SK-N-SH (cell line): ENCODE measurements at regions of chr1 and their contacts with region 1.

Region 1: DNA sequence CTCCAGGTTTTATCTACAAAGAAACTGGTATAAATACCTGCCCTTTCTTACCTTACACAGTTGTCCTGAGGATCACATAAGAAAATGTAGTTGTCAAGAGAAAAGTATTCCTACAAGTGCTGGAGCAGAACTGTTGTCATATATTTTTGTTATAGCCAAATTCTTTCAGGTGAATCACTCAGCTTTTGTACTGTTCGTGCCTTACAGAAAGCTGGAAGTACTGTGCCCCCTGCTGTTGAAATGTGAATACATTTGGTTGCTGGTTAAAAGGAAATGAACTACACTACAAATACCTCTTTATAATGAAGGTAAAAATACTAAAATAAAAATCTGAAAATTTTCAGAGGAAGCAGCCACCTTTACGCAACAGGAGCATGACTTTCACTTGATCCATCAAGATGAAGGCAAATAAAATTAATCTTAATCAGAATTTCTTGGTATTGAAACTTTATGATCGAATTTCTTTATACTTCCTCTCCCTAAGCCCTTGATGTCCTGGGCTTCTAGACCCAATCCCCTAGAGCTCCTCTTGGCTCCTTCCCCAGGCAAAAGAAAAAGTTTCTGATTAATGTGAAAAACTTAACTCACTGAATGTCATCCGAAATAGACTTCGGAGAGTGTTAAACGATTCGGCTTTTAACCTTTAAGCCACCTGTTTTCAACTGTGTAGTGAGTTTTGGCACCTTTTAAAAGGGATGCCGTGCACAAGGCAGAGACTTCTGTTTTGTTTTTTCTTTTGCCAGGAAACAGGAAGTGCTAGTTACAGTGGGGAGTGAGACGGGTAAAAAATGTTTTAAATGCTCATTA is 12.5 kb downstream of the CHML start:
- DNase-seq: no peak
- H3K4me3 ChIP-seq: no peak overlapping the region
- H3K27ac ChIP-seq: no peak overlapping the region
- H3K4me1 ChIP-seq: no peaks in the 10 kb centered on the region; a peak in 1 of 4 replicates
- H3K27me3 ChIP-seq: no peaks in the 10 kb centered on the region
- CTCF ChIP-seq: peak; percentile 82
- EP300 ChIP-seq: no peak
- RAD21 ChIP-seq: peak; percentile 62

Region 2: DNA sequence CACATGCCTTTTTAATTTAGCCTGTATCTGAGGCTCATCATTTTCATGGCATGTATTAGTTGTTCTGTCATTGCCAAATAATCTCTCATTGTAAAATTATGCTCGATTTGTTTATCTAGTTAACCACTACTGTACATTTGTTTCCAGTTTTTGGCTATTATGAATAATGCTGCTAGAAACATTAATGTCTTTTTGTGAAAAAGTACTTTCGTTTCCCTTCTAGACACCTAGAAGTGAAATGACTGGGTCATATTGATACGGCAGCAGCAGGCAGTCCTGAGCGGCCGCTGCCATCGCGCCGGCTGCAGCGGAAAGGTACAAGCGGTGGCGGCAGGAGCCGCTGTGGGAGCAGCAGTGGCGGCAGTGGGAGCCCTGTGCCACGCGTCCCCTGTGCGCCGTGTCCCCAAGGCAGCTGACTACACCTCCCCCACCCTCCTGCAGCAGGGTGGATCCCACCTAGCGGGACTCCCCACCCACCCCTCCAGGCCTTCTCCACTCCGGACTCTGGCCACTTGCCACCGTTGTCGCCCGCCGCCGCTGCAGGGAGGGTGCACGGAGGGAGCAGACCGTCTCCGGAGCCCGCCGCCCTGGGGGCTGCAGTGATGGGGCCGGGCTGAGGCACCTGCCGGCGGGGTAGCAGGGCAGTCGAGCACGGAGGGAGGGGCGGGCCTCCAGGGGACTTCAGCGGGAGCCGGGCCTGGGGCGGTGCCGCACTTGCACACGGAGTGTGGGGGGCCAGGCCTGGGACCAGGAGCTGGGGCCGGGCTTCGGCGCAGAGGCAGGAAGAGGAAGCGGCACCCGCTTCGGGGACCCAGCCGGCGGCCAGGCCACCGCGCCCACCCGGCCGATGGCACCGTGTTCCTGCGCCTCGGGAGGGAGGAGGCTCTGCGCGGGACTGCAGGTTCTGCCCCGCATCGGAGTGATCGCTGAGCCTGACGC is 203.8 kb before region 1 on chr1:
- CTCF ChIA-PET with region 1: no interaction called
- POLR2A ChIA-PET with region 1: no interaction called
- DNase-seq: peak; percentile 81
- H3K4me3 ChIP-seq: peak overlapping the region; percentile 59 to 72
- H3K27ac ChIP-seq: peak overlapping the region in 1 of 2 experiments; percentile 26; a peak in 1 of 4 replicates
- H3K4me1 ChIP-seq: no peaks in the 10 kb centered on the region; a peak in 1 of 4 replicates
- H3K27me3 ChIP-seq: no peaks in the 10 kb centered on the region
- CTCF ChIP-seq: no peak
- EP300 ChIP-seq: no peak
- RAD21 ChIP-seq: peak; percentile 40; the same call in 1 of the 2 replicates

Region 3: GRCh38 chr1:241603731-241604245 is 23.9 kb before region 1 on chr1:
- CTCF ChIA-PET with region 1: no interaction called
- POLR2A ChIA-PET with region 1: no interaction called
- DNase-seq: no peak
- H3K4me3 ChIP-seq: no peak overlapping the region
- H3K27ac ChIP-seq: peak overlapping the region in 1 of 2 experiments; percentile 38; a peak in 1 of 4 replicates
- H3K4me1 ChIP-seq: peaks cover 0 to 8% of the 10 kb centered on the region in 2 experiments; a peak in 2 of 4 replicates
- H3K27me3 ChIP-seq: no peaks in the 10 kb centered on the region
- CTCF ChIP-seq: no peak
- EP300 ChIP-seq: no peak
- RAD21 ChIP-seq: no peak

Region 4: GRCh38 chr1:241639623-241640028 is 12.0 kb after region 1 on chr1:
- CTCF ChIA-PET with region 1: interaction called, 10 read pairs
- POLR2A ChIA-PET with region 1: no interaction called
- DNase-seq: peak; percentile 78
- H3K4me3 ChIP-seq: peak overlapping the region; percentile 85 to 95
- H3K27ac ChIP-seq: peak overlapping the region; percentile 46 to 82; a peak in 3 of 4 replicates
- H3K4me1 ChIP-seq: peaks cover 11 to 23% of the 10 kb centered on the region in 2 experiments
- H3K27me3 ChIP-seq: no peaks in the 10 kb centered on the region
- CTCF ChIP-seq: no peak
- EP300 ChIP-seq: no peak
- RAD21 ChIP-seq: no peak